ENCODE measurements at regions of chr5 and their contacts with region 1.

Region 1: GRCh38 chr5:142145106-142145900 is 36.7 kb downstream of the NDFIP1 start:
- DNase-seq: peak; percentile 21 to 77
- ATAC-seq: peak; percentile 82 to 90 (median 86)
- H3K4me3 ChIP-seq: no peak overlapping the region
- H3K4me3 Mint-ChIP-seq: no peak overlapping the region
- H3K27ac ChIP-seq: no peak overlapping the region
- H3K27ac Mint-ChIP-seq: no peak overlapping the region
- H3K4me1 ChIP-seq: no peaks in the 10 kb centered on the region
- H3K4me1 Mint-ChIP-seq: no peaks in the 10 kb centered on the region
- H3K27me3 ChIP-seq: no peaks in the 10 kb centered on the region
- H3K27me3 Mint-ChIP-seq: no peaks in the 10 kb centered on the region
- CTCF ChIP-seq: peak; percentile 67

Region 2: DNA sequence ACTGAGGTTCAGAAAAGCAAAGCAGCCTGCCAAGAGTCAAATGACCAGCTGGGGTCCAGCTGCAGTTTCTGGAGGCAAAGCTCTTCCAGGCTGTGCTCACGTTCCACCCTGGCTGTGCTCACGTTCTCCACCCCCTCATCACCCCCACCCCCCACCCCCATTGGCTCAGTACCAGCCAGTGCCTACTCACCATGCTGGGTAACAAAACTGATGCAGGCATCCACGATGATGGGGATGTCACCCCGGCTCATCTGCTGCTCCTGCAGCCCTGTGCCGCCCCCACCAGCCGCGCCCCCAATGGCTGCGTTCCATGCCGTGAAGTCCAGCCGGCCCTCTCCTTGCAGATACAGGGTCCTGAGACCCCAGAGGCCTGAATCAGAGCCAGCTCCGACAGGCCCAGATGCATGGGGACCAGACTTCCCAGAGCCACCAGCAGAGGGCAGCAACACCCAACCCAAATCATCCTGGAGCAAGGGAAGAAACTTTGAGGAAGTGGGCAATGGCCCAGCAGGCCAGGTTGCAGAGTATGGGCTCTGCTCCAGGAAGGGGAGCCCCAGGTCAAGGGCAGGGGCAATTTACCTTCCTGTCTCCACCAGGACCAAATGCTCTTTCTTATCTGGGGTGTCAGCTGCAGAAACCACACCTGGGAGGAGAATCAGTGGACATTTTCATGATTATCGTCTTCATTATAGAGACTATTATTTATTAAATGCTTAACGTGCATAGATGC is 480.4 kb before region 1 on chr5:
- intact Hi-C with region 1: loop called (anchors 10 kb)
- DNase-seq: peak; percentile 71 to 85
- ATAC-seq: peak; percentile 87 to 95 (median 91)
- H3K4me3 ChIP-seq: no peak overlapping the region
- H3K4me3 Mint-ChIP-seq: no peak overlapping the region
- H3K27ac ChIP-seq: no peak overlapping the region
- H3K27ac Mint-ChIP-seq: peak overlapping the region in 1 of 2 donors; percentile 31
- H3K4me1 ChIP-seq: peaks cover 3% of the 10 kb centered on the region
- H3K4me1 Mint-ChIP-seq: peaks cover 4 to 5% of the 10 kb centered on the region in 2 donors
- H3K27me3 ChIP-seq: no peaks in the 10 kb centered on the region
- H3K27me3 Mint-ChIP-seq: no peaks in the 10 kb centered on the region
- CTCF ChIP-seq: peak; percentile 89

Region 3: GRCh38 chr5:141691867-141692532 is 453.3 kb before region 1 on chr5:
- intact Hi-C with region 1: loop called (anchors 2 kb)
- DNase-seq: peak; percentile 88 to 89
- ATAC-seq: peak; percentile 95 to 99 (median 99)
- H3K4me3 ChIP-seq: no peak overlapping the region
- H3K4me3 Mint-ChIP-seq: peak overlapping the region; percentile 42
- H3K27ac ChIP-seq: no peak overlapping the region
- H3K27ac Mint-ChIP-seq: peak overlapping the region in 1 of 2 donors; percentile 83
- H3K4me1 ChIP-seq: peaks cover 22% of the 10 kb centered on the region
- H3K4me1 Mint-ChIP-seq: peaks cover 13 to 15% of the 10 kb centered on the region in 2 donors
- H3K27me3 ChIP-seq: no peaks in the 10 kb centered on the region
- H3K27me3 Mint-ChIP-seq: peaks cover 3 to 11% of the 10 kb centered on the region in 2 donors
- CTCF ChIP-seq: peak; percentile 95

Region 4: DNA sequence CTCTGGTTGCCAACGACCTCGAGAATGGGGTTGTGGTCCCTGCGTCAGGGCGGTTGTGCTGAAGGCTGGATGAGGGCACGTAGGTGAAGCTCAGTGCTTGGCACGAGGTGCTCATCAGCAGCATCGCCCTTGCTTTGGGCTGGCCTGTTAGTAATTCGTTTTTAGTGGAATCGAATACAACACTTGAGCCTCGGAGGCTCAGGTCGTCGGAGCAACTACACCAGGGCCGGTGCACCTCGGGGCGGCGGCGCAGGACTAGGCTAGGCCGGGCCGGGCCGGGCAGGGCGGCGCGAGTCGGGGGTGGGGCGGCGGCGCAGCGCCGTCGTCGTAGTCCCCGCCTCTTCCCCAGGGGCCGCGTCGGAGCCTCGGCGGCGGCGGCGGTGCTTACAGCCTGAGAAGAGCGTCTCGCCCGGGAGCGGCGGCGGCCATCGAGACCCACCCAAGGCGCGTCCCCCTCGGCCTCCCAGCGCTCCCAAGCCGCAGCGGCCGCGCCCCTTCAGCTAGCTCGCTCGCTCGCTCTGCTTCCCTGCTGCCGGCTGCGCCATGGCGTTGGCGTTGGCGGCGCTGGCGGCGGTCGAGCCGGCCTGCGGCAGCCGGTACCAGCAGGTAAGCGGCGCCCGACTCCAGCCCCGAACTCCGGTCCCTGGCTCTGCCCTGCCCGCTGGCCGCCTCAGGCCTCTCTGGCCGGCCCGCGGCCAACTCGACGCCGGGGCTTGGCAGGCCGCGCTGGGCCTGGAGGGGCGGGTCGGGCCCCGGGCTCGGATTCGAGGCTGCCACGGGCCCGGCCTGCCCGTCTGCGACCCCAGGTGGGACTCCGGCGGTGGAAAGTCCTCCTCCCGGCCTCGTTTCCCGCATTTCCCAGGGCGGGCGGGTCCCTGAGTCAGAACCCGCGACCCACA is 36.6 kb before region 1 on chr5 and contains the start of gene NDFIP1:
- intact Hi-C with region 1: loop called (anchors 5 kb)
- DNase-seq: peak; percentile 82 to 91
- ATAC-seq: peak; percentile 95 to 99 (median 96)
- H3K4me3 ChIP-seq: peak within 1 kb of the TSS; percentile 66
- H3K4me3 Mint-ChIP-seq: peak within 1 kb of the TSS; percentile 96
- H3K27ac ChIP-seq: peak within 1 kb of the TSS; percentile 93
- H3K27ac Mint-ChIP-seq: peak within 1 kb of the TSS; percentile 85 to 87
- H3K4me1 ChIP-seq: peaks cover 15% of the 10 kb centered on the region
- H3K4me1 Mint-ChIP-seq: peaks cover 37 to 42% of the 10 kb centered on the region in 2 donors
- H3K27me3 ChIP-seq: no peaks in the 10 kb centered on the region
- H3K27me3 Mint-ChIP-seq: peaks cover 4 to 12% of the 10 kb centered on the region in 2 donors
- CTCF ChIP-seq: peak; percentile 12
- total RNA-seq, gene NDFIP1: 45.4 to 57.6 (median 51.7) TPM

Region 5: DNA sequence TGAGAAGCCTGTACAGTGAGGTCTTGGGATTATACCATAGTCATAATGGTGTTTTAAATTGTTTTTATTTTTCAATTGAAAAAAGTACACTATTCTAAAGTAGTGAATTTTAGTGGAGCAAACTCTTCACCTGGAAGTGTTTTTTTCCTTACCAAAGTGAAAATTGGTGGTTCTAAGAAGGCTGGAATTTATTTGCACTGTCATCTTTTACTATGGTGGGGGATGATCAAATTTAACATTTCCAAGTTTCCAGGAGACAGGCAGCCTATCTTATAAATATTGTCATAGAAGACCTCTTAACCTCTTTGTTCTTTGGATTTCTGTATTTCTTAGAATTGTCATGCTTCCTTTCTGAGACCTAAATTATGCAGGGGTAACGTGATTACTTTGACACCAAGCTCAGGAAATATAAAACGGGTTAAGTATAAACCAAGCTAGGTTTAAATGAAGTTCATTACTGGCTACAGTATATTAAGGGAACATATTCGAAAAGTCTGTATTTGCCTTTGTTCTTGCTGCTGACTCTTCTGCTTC is 16.6 kb before region 1 on chr5:
- intact Hi-C with region 1: no loop called
- DNase-seq: no peak
- ATAC-seq: no peak
- H3K4me3 ChIP-seq: no peak overlapping the region
- H3K4me3 Mint-ChIP-seq: no peak overlapping the region
- H3K27ac ChIP-seq: no peak overlapping the region
- H3K27ac Mint-ChIP-seq: peak overlapping the region in 1 of 2 donors; percentile 69
- H3K4me1 ChIP-seq: no peaks in the 10 kb centered on the region
- H3K4me1 Mint-ChIP-seq: peaks cover 34 to 39% of the 10 kb centered on the region in 2 donors
- H3K27me3 ChIP-seq: no peaks in the 10 kb centered on the region
- H3K27me3 Mint-ChIP-seq: no peaks in the 10 kb centered on the region
- CTCF ChIP-seq: no peak